ENCODE measurements at regions of chr2 and their contacts with region 1.

Region 1: GRCh38 chr2:201158111-201158929 is 24.6 kb upstream of the CASP10 start:
- DNase-seq: peak in 1 of 2 experiments; percentile 55
- H3K4me3 ChIP-seq: no peak overlapping the region
- H3K27ac ChIP-seq: peak overlapping the region; percentile 31; the same call in 1 of the 2 replicates
- H3K4me1 ChIP-seq: peaks cover 0 to 6% (median 3%) of the 10 kb centered on the region in 4 experiments; a peak in 1 of 7 replicates
- H3K27me3 ChIP-seq: no peaks in the 10 kb centered on the region
- CTCF ChIP-seq: peak in 2 of 3 experiments; percentile 64 to 76; a peak in 3 of 4 replicates
- EP300 ChIP-seq: no peak
- POLR2A ChIP-seq: 0 out of 3 replicates have a peak, but pooled peaks of 1 of the 2 experiments have one; percentile 26
- RAD21 ChIP-seq: peak; percentile 84 to 89

Region 2: GRCh38 chr2:200963124-200963917 is 195.0 kb before region 1 on chr2 and contains the start of gene ORC2:
- CTCF ChIA-PET with region 1: interaction called, 51 read pairs
- POLR2A ChIA-PET with region 1: interaction called, 11 read pairs
- DNase-seq: peak; percentile 94 to 97
- H3K4me3 ChIP-seq: peak within 1 kb of the TSS; percentile 79 to 95 (median 90)
- H3K27ac ChIP-seq: peak within 1 kb of the TSS; percentile 90
- H3K4me1 ChIP-seq: peaks cover 0 to 6% (median 3%) of the 10 kb centered on the region in 4 experiments; a peak in 4 of 7 replicates
- H3K27me3 ChIP-seq: no peaks in the 10 kb centered on the region
- CTCF ChIP-seq: peak; percentile 61 to 88 (median 75)
- EP300 ChIP-seq: peak in 1 of 2 experiments; percentile 47; a peak in 1 of 3 replicates
- POLR2A ChIP-seq: peak; percentile 44 to 80
- RAD21 ChIP-seq: peak; percentile 57 to 69
- total RNA-seq, gene ORC2: 82.3 and 89.8 TPM in 2 replicates

Region 3: DNA sequence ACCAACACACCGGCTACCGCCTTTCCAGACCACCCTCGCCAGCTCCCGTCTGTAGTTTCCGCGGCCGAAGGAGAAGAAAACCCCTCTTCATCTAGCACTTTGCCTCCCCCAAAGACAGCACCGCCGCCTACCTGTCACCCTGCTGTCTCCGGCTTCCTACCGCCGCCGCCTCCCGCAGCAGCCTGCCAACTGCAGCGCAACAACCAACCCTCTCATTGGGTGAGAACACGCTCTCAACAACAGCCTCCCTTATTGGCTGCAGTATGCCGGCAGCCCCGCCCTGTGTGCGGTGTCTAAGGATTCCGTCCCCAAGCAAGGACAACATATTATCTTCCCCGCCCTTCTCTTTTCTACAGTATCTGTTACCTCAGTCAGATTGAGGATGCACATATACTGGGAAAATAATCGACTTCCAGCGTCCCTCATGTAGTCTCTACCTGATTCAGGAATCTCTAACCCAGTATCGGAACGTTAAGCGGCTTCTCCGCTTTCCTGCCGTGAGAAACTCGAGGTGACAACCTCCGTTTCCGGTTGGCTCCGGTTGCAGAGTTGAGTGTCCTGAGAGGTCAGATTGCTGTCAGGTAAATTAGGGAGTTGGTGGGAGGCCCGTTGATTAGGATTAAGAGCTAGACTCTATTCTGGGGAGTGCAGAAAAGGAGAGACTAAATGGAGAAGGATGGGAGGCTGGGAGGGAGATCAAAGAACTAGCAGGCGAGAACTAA is 86.7 kb before region 1 on chr2 and contains the starts of genes HYCC2 and NDUFB3:
- CTCF ChIA-PET with region 1: interaction called, 38 read pairs
- POLR2A ChIA-PET with region 1: no interaction called
- DNase-seq: peak; percentile 85 to 90
- H3K4me3 ChIP-seq: peak within 1 kb of the TSS; percentile 82 to 99 (median 87)
- H3K27ac ChIP-seq: peak within 1 kb of the TSS; percentile 98
- H3K4me1 ChIP-seq: peaks cover 0 to 3% (median 0%) of the 10 kb centered on the region in 4 experiments; a peak in 2 of 7 replicates
- H3K27me3 ChIP-seq: no peaks in the 10 kb centered on the region
- CTCF ChIP-seq: peak; percentile 5 to 28 (median 24)
- EP300 ChIP-seq: peak in 1 of 2 experiments; percentile 11; a peak in 1 of 3 replicates
- POLR2A ChIP-seq: peak in 1 of 2 experiments; percentile 64; a peak in 1 of 3 replicates
- RAD21 ChIP-seq: peak in 1 of 2 experiments; percentile 19; a peak in 2 of 4 replicates
- total RNA-seq, gene HYCC2: 7.8 and 8.0 TPM in 2 replicates
- total RNA-seq, gene NDUFB3: 55.3 and 57.5 TPM in 2 replicates

Region 4: GRCh38 chr2:201118121-201118960 is 40.0 kb before region 1 on chr2:
- CTCF ChIA-PET with region 1: interaction called, 21 read pairs
- POLR2A ChIA-PET with region 1: no interaction called
- DNase-seq: peak in 1 of 2 experiments; percentile 52
- H3K4me3 ChIP-seq: peak overlapping the region; percentile 31 to 67 (median 54)
- H3K27ac ChIP-seq: no peak overlapping the region
- H3K4me1 ChIP-seq: peaks cover 4 to 11% (median 7%) of the 10 kb centered on the region in 4 experiments
- H3K27me3 ChIP-seq: no peaks in the 10 kb centered on the region
- CTCF ChIP-seq: peak; percentile 12 to 42 (median 22)
- EP300 ChIP-seq: no peak
- POLR2A ChIP-seq: no peak; a peak in 1 of 3 replicates
- RAD21 ChIP-seq: peak; percentile 16 to 26; a peak in 2 of 4 replicates

Region 5: GRCh38 chr2:201171259-201171814 is 13.0 kb after region 1 on chr2:
- CTCF ChIA-PET with region 1: interaction called, 12 read pairs
- POLR2A ChIA-PET with region 1: interaction called, 4 read pairs
- DNase-seq: no peak
- H3K4me3 ChIP-seq: no peak overlapping the region
- H3K27ac ChIP-seq: no peak overlapping the region
- H3K4me1 ChIP-seq: no peaks in the 10 kb centered on the region
- H3K27me3 ChIP-seq: no peaks in the 10 kb centered on the region
- CTCF ChIP-seq: no peak
- EP300 ChIP-seq: no peak
- POLR2A ChIP-seq: no peak
- RAD21 ChIP-seq: no peak

Region 6: DNA sequence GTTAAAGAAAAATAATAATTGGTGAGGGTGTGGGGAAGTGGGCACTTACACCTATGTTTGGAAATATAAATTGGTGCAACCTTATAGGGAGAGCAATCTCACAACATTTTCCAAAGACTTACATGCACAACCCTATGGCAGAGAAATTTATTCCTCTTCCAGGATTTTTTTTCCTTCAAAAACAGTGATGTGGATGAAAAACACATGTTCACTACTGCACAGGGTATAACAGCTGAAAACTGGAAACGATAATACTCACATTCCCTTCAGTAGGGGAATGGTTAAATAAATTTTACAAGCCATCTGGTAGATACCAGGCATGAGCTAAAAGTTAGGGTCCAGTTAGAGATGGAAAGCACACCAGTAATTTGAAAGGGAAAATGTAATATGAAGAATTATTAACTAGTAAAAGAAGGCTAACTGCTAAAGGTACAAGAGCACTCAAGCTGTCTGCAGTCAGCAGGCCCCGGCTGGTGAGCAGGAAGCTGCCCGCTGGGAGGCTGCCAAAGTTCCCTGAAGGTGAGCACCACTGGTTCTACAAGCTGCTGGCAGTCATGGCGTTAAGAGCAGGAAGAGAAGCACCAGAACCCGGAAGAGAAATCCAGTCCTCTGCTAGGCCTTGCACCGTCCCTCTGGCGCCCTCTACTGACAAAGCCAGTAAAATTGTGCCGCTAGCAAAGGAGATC is 73.6 kb after region 1 on chr2:
- CTCF ChIA-PET with region 1: interaction called, 11 read pairs
- POLR2A ChIA-PET with region 1: no interaction called
- DNase-seq: peak; percentile 70 to 89
- H3K4me3 ChIP-seq: no peak overlapping the region
- H3K27ac ChIP-seq: no peak overlapping the region
- H3K4me1 ChIP-seq: no peaks in the 10 kb centered on the region; a peak in 1 of 7 replicates
- H3K27me3 ChIP-seq: no peaks in the 10 kb centered on the region; a peak in 2 of 7 replicates
- CTCF ChIP-seq: peak; percentile 81 to 97 (median 89)
- EP300 ChIP-seq: no peak
- POLR2A ChIP-seq: peak in 1 of 2 experiments; percentile 38; a peak in 1 of 3 replicates
- RAD21 ChIP-seq: peak; percentile 90 to 96